Heart left ventricle (tissue), 16 donors: ENCODE measurements at regions of chr16 and their contacts with region 1.

Region 1: DNA sequence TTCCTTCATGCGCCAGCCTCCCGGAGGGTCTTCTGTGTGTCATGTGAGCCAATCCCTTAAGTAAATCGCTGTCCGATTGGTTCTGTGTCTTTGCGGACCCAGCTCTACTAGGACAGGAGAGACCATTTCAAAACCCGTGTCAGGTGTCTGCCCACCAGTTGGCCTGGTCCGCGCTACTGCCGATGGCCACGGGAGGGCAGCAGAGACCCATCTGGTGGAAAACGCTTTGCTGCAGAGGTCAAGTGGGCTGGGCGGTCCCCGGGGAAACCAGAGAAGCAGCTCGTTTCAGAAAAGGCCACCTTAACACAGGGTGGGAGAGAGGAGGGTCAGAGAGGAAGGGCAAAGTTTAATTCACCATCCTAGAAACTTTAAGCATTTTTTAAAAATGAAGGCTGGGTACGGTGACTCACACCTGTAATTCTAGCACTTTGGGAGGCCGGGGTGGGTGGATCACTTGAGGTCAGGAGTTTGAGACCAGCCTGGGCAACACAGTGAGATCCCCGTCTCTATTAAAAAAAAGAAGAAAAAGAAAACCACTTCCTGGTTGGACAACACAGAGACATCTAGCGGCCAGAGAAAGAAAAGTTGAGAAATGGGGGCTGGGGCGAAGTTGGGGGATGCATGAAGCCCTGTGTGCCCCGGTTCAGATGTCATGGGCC is 2.8 kb upstream of the CIBAR2 start:
- DNase-seq: peak; percentile 86 to 94 (median 88)
- ATAC-seq: peak; percentile 70 to 91 (median 86)
- H3K4me3 ChIP-seq: peak overlapping the region in 4 of 12 donors; percentile 23 to 40 (median 29)
- H3K27ac ChIP-seq: peak overlapping the region in 7 of 12 donors; percentile 23 to 60 (median 49)
- H3K4me1 ChIP-seq: peaks cover 0 to 9% (median 1%) of the 10 kb centered on the region in 12 donors
- H3K27me3 ChIP-seq: no peaks in the 10 kb centered on the region
- CTCF ChIP-seq: peak; percentile 85 to 99 (median 96)
- POLR2A ChIP-seq: no peak

Region 2: DNA sequence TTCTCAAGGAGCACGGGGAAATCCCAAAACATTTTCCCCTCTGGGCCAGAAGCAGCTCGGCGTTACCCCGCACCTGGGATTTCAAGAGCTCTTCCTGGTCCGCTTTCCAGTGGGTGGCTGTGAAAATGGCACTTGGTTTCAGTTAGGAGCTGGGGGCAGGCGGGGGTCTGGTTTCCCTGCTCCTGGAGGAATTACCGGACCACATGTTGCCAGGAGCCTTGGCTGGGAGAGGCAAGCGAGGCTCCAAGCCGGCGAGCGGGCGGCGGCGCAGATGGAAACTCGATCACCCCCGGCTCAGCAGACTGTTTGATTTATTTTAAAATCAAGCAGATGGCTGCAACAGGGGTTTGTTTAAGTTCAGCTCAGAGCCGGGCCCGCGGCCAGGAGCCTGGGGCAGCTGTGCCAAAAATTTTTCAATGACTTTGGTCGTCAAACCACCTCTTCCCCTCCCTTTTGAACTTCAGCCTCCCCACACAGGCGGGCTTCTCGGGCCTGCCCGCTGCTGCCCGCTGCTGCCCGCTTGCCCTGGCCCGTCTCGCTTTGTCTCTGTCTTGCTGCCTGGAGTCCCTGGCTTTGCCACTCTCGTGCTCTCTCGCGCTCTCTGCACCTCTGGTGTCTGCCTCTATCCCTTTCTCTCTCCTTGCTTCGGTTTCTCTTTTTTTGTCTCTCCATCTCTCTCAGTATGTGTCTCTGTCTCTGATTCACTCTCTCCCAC is 105.2 kb after region 1 on chr16:
- intact Hi-C with region 1: loop called in 2 of 10 experiments (anchors 5 to 10 kb)
- DNase-seq: peak; percentile 77 to 88 (median 86)
- ATAC-seq: peak; percentile 63 to 89 (median 88)
- H3K4me3 ChIP-seq: peak overlapping the region in 10 of 12 donors; percentile 20 to 51 (median 38)
- H3K27ac ChIP-seq: peak overlapping the region in 11 of 12 donors; percentile 54 to 82 (median 70)
- H3K4me1 ChIP-seq: peaks cover 6 to 20% (median 16%) of the 10 kb centered on the region in 12 donors
- H3K27me3 ChIP-seq: no peaks in the 10 kb centered on the region
- CTCF ChIP-seq: peak in 2 of 12 donors; percentile 23 to 41
- POLR2A ChIP-seq: no peak

Region 3: GRCh38 chr16:85234310-85235204 is 119.5 kb after region 1 on chr16:
- intact Hi-C with region 1: loop called in 7 of 10 experiments (anchors 5 to 10 kb)
- DNase-seq: peak; percentile 70 to 83 (median 76)
- ATAC-seq: peak; percentile 37 to 77 (median 66)
- H3K4me3 ChIP-seq: peak overlapping the region in 10 of 12 donors; percentile 15 to 58 (median 48)
- H3K27ac ChIP-seq: peak overlapping the region in 9 of 12 donors; percentile 12 to 79 (median 47)
- H3K4me1 ChIP-seq: peaks cover 2 to 63% (median 36%) of the 10 kb centered on the region in 12 donors
- H3K27me3 ChIP-seq: peaks cover 0 to 16% (median 0%) of the 10 kb centered on the region in 9 donors
- CTCF ChIP-seq: no peak
- POLR2A ChIP-seq: no peak

Region 4: GRCh38 chr16:85245307-85246172 is 130.5 kb after region 1 on chr16:
- intact Hi-C with region 1: loop called in 3 of 10 experiments (anchors 2 to 10 kb)
- DNase-seq: peak in 4 of 5 donors; percentile 59 to 74 (median 63)
- ATAC-seq: peak in 3 of 4 donors; percentile 51 to 65 (median 62)
- H3K4me3 ChIP-seq: no peak overlapping the region
- H3K27ac ChIP-seq: no peak overlapping the region
- H3K4me1 ChIP-seq: peaks cover 0 to 6% (median 0%) of the 10 kb centered on the region in 12 donors
- H3K27me3 ChIP-seq: peaks cover 0 to 3% (median 0%) of the 10 kb centered on the region in 9 donors
- CTCF ChIP-seq: peak; percentile 64 to 88 (median 78)
- POLR2A ChIP-seq: no peak

Region 5: GRCh38 chr16:85354686-85355514 is 239.9 kb after region 1 on chr16:
- intact Hi-C with region 1: no loop called
- DNase-seq: peak in 1 of 5 donors; percentile 44
- ATAC-seq: no peak
- H3K4me3 ChIP-seq: no peak overlapping the region
- H3K27ac ChIP-seq: peak overlapping the region in 1 of 12 donors; percentile 58
- H3K4me1 ChIP-seq: peaks cover 0 to 20% (median 2%) of the 10 kb centered on the region in 12 donors
- H3K27me3 ChIP-seq: no peaks in the 10 kb centered on the region
- CTCF ChIP-seq: no peak
- POLR2A ChIP-seq: no peak